ENCODE measurements at regions of chr5 and their contacts with region 1.

Region 1: GRCh38 chr5:79464695-79465332 is 49.1 kb downstream of the HOMER1 start:
- DNase-seq: no peak
- H3K4me3 ChIP-seq: no peak overlapping the region
- H3K27ac ChIP-seq: no peak overlapping the region
- H3K4me1 ChIP-seq: peaks cover 0 to 8% of the 10 kb centered on the region in 2 donors
- H3K27me3 ChIP-seq: no peaks in the 10 kb centered on the region
- CTCF ChIP-seq: peak; percentile 27 to 79 (median 52)
- POLR2A ChIP-seq: no peak

Region 2: GRCh38 chr5:78920604-78921003 is 544.2 kb before region 1 on chr5:
- intact Hi-C with region 1: no loop called
- DNase-seq: peak in 1 of 2 donors; percentile 9
- H3K4me3 ChIP-seq: no peak overlapping the region
- H3K27ac ChIP-seq: no peak overlapping the region
- H3K4me1 ChIP-seq: no peaks in the 10 kb centered on the region
- H3K27me3 ChIP-seq: no peaks in the 10 kb centered on the region
- CTCF ChIP-seq: peak in 2 of 6 experiments; percentile 24 to 25
- POLR2A ChIP-seq: no peak

Region 3: GRCh38 chr5:79133657-79134451 is 331.0 kb before region 1 on chr5:
- intact Hi-C with region 1: loop called (anchors 5 kb)
- DNase-seq: peak; percentile 77 to 80
- H3K4me3 ChIP-seq: peak overlapping the region in 1 of 3 donors; percentile 13
- H3K27ac ChIP-seq: peak overlapping the region in 2 of 3 donors; percentile 51 to 72
- H3K4me1 ChIP-seq: peaks cover 4 to 5% of the 10 kb centered on the region in 2 donors
- H3K27me3 ChIP-seq: no peaks in the 10 kb centered on the region
- CTCF ChIP-seq: peak in 5 of 6 experiments; percentile 62 to 81 (median 78)
- POLR2A ChIP-seq: no peak

Measured in thyroid gland (tissue), 4 donors.